ENCODE measurements at regions of chr22 and their contacts with region 1.

Region 1: DNA sequence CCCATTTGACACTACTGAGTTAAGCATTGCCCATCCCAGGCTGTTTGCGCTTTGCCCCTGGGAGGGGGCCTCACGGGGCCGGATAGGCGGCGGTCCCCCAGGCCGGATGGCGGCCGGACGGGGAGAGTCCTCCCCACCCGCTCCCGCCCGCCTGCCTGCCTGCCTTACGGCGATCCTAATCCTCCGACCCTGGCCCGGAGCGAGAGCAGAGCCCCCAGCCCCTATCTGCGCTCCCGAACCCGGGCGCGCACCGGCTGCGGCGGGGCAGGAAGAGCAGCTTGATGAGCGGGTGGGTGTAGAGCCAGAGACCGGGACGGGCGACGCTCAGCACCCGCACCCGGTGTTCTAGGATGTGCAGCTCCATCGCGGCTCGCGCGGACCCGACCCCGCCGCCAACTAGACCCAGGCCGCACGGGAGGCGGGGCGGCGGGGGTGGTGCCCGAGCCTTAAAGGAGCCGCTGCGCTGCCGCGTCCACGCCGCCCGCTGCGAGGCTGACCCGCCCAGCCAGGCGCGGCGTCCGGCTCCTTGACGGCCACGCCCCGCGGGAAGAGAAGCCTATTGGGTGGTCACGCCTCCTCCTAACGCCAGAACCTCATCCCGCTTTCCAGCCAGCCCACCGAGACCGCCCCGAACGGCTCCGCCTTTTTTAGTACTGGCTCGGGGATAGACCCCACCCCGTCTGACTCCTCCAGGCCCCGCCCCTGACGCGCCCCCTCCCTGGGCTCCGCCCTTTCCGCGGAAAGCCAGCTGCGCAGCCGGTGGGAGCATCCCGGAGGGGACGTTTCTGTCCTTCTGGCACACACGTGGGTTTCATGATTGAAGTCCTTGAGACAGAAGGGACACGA is at the start of gene CASTOR1:
- DNase-seq: peak; percentile 95
- ATAC-seq: peak; percentile 78
- H3K4me3 Mint-ChIP-seq: peak within 1 kb of the TSS; percentile 84
- H3K27ac Mint-ChIP-seq: peak within 1 kb of the TSS; percentile 90
- H3K4me1 Mint-ChIP-seq: peaks cover 32% of the 10 kb centered on the region
- H3K27me3 Mint-ChIP-seq: no peaks in the 10 kb centered on the region
- total RNA-seq, gene CASTOR1: 24.2 to 27.5 TPM

Region 2: DNA sequence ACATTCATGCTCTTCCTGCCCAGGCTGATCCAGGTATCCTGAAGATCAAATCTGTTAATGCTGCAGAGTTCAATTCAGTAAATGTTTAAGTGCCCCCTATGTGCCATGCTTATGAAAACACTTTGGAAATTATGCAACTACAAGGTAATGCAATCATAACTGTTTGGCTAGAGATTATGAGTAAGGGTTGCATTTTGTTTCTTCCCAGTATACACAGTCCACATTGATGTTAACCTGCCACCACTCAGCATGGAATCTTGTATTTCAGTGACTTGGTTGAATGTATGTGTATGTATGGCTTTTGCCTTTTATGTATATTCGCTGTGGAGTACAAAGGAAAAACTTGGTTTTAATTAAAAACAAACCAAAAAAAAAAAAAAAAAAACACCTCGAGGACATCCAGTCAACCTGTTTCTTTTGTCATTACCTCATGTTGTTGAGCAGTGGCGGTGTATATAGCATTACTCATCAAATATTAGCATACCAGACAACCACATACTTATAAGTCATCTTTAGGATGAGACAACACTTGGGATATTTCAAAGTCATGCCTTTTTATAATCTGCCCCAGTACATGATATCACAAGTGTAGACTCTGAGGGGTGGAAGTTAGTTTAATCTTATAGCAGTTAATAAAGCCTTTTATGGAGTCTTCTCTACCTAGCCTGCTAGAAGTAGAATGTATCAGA is 295.2 kb before region 1 on chr22:
- POLR2A ChIA-PET with region 1: no interaction called
- DNase-seq: no peak
- ATAC-seq: no peak
- H3K4me3 Mint-ChIP-seq: no peak overlapping the region
- H3K27ac Mint-ChIP-seq: no peak overlapping the region
- H3K4me1 Mint-ChIP-seq: peaks cover 2% of the 10 kb centered on the region
- H3K27me3 Mint-ChIP-seq: no peaks in the 10 kb centered on the region

Region 3: DNA sequence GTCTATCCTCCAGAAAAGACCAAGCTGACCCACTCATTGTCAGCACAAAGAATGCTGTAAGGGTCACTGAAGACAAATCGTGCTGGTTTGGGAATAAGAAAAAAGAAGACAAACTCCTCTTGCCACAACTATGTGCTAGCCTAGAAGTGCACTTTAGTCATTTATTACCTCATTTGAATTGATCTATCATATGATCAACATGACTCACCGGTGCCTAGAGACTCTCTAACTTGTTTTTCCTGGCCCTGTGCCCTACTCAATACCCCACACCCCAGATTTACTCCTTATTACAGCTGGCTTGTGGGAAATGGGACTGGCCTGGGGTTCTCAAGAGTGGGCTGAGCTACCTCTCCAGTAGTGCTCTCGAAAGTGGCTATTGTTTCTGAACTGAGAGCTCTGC is 245.0 kb before region 1 on chr22:
- POLR2A ChIA-PET with region 1: no interaction called
- DNase-seq: no peak
- ATAC-seq: no peak
- H3K4me3 Mint-ChIP-seq: no peak overlapping the region
- H3K27ac Mint-ChIP-seq: no peak overlapping the region
- H3K4me1 Mint-ChIP-seq: peaks cover 5% of the 10 kb centered on the region
- H3K27me3 Mint-ChIP-seq: peaks cover 8% of the 10 kb centered on the region

Region 4: DNA sequence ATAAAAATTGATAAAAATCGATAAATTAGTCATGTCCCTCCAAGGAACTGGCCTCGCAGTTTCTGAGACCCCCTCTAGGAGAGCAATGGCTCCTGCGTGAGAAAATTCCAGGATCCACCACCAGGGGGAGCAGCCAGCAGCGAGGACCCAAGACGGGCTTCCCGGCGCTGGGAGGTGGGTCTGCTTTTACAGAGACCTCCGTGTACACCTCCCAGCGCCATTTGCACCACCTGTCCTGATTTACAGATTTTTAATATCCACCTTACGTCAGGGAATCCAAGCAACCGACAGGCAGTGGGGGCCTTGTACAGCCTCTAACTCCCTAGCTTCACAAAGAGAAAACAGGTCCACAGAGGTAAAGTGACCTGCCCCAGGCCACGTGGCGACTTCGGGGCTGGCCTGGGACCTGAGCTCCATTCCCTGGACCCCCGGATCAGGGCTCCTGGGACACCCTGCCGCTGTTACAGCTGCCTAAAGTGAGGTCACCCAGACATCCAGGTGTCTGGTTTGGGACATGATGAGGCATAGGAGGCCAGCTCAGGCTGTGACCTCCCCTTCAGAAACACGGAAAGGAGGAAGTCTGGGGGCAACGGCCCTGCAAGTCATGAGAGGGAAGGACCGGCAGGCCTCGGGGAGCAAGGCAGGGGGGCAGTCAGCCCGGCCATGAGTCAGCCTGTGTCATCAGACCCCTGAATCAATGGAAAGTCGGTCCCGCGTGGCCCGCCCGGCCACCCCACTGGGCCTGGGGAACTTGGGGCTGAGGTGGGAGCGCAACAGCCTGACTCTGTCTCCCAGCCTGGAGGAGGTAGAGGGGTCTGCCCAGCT is 26.2 kb before region 1 on chr22:
- POLR2A ChIA-PET with region 1: interaction called, 14 read pairs
- DNase-seq: peak; percentile 83
- ATAC-seq: no peak
- H3K4me3 Mint-ChIP-seq: peak overlapping the region; percentile 88
- H3K27ac Mint-ChIP-seq: peak overlapping the region; percentile 97
- H3K4me1 Mint-ChIP-seq: peaks cover 51% of the 10 kb centered on the region
- H3K27me3 Mint-ChIP-seq: no peaks in the 10 kb centered on the region

Region 5: DNA sequence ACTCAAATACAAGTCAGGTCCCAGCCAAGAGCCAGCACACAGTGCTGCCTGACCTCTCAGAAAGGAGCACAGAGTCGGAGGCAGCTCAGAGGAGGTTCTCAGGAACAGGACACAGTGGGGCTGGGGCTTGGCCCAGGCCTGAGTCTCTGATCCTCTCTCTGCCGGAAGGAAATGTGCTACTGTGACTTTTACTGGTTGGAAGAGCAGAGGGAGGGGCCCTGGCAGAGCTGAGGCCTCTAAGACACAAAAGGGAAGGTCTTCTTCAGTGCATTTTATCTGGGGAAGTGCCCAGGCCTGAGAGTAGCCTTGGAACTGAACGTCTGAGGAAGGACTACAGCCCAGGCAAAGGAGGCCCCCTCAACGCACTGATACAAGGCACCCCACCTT is 16.2 kb after region 1 on chr22:
- POLR2A ChIA-PET with region 1: interaction called, 110 read pairs
- DNase-seq: peak; percentile 66
- ATAC-seq: peak; percentile 85
- H3K4me3 Mint-ChIP-seq: peak overlapping the region; percentile 73
- H3K27ac Mint-ChIP-seq: peak overlapping the region; percentile 80
- H3K4me1 Mint-ChIP-seq: peaks cover 87% of the 10 kb centered on the region
- H3K27me3 Mint-ChIP-seq: no peaks in the 10 kb centered on the region

Region 6: GRCh38 chr22:30314915-30315314 is 25.6 kb after region 1 on chr22:
- POLR2A ChIA-PET with region 1: interaction called, 18 read pairs
- DNase-seq: no peak
- ATAC-seq: no peak
- H3K4me3 Mint-ChIP-seq: peak overlapping the region; percentile 16
- H3K27ac Mint-ChIP-seq: peak overlapping the region; percentile 35
- H3K4me1 Mint-ChIP-seq: peaks cover 76% of the 10 kb centered on the region
- H3K27me3 Mint-ChIP-seq: no peaks in the 10 kb centered on the region

Region 7: DNA sequence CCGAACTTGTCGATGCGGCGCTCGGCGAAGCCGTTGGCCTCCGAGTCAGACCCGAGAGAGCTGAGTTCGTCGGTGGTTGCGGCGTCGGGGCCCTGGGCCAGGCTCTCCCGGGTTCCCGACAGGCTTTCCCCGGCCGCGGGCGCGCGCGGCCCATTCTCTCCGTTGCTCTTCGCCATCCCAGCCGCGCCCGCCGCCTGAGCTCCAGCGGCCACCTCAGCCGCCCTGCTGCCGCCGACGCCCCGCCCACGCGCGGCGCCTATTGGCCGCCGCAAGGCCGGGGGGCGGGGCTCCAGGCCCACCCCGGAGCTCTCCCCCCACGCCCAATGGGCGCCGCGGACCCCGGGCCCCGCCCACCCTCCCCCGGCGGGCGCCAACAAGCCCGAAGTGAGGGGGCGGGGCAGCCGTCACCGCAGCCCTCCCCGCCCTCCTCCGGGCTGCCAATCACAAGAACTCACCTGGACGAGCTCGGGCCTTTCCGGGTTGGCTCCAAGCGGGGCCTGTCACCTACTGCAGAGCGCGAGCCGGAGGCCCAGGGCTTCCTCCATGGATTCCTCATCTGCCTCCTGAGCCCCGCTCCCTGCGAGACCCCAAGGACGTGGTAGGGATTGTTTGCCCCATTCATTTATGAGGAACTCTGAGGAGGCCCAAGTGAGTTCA is 37.5 kb after region 1 on chr22 and contains the start of gene TBC1D10A:
- POLR2A ChIA-PET with region 1: interaction called, 80 read pairs
- DNase-seq: peak; percentile 96
- ATAC-seq: peak; percentile 85
- H3K4me3 Mint-ChIP-seq: peak within 1 kb of the TSS; percentile 95
- H3K27ac Mint-ChIP-seq: peak within 1 kb of the TSS; percentile 86
- H3K4me1 Mint-ChIP-seq: peaks cover 38% of the 10 kb centered on the region
- H3K27me3 Mint-ChIP-seq: no peaks in the 10 kb centered on the region
- total RNA-seq, gene TBC1D10A: 54.0 to 54.2 TPM

Region 8: DNA sequence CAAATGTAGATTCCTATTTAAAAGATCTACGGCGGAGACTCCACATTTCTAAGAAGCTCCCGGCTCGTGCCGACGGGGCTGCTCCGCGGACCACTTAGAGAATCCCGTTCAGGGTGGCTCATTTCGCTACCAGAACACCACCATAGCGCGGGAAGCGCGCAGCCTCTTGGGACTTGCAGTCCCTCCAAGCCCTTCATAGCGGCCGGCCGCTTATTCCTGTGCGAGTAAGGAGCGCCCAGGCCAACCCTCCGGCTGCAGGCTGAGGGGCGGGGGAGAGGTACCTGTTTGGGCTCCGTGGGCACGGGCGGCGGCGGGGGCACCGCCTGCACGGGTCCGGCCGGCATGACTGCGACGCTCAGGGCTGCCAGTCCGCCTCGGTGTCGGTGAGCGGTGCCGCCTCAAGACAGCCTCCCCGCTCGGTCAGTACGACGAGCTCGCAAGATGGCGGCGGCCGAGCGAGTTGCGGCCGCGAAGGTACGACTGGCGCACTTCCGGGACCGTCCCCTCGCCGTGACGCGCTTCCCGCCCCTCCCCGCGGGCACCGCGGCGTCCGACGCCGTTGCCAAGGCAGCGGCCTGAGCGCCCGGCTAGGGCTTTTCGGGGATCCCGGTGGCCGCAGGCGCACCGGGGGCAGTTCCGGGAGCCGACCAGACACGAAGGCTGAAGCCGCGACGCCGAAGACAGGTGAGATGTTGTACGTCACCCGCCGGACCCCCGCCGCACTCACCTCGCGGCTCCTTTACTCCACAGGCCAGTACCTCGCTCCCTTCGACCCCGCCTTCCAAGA is 67.3 kb after region 1 on chr22 and contains the starts of genes CCDC157 and SF3A1:
- POLR2A ChIA-PET with region 1: interaction called, 37 read pairs
- DNase-seq: peak; percentile 93
- ATAC-seq: peak; percentile 94
- H3K4me3 Mint-ChIP-seq: peak within 1 kb of the TSS; percentile 94
- H3K27ac Mint-ChIP-seq: peak within 1 kb of the TSS; percentile 82
- H3K4me1 Mint-ChIP-seq: peaks cover 39% of the 10 kb centered on the region
- H3K27me3 Mint-ChIP-seq: no peaks in the 10 kb centered on the region
- total RNA-seq, gene CCDC157: 4.0 to 4.7 TPM
- total RNA-seq, gene SF3A1: 220 to 233 TPM

Region 9: GRCh38 chr22:30386960-30387827 is 97.8 kb after region 1 on chr22 and contains the start of gene RNF215:
- POLR2A ChIA-PET with region 1: interaction called, 100 read pairs
- DNase-seq: peak; percentile 95
- ATAC-seq: peak; percentile 79
- H3K4me3 Mint-ChIP-seq: peak within 1 kb of the TSS; percentile 88
- H3K27ac Mint-ChIP-seq: peak within 1 kb of the TSS; percentile 90
- H3K4me1 Mint-ChIP-seq: peaks cover 21% of the 10 kb centered on the region
- H3K27me3 Mint-ChIP-seq: no peaks in the 10 kb centered on the region
- total RNA-seq, gene RNF215: 11.1 to 11.3 TPM